ENCODE measurements at regions of chrX and their contacts with region 1.

Region 1: GRCh38 chrX:84974803-84975202 is 28.9 kb upstream of the APOOL start:
- DNase-seq: peak in 1 of 3 donors; percentile 28
- ATAC-seq: no peak
- H3K4me3 ChIP-seq: no peak overlapping the region
- H3K27ac ChIP-seq: no peak overlapping the region
- H3K4me1 ChIP-seq: no peaks in the 10 kb centered on the region
- H3K27me3 ChIP-seq: no peaks in the 10 kb centered on the region

Region 2: DNA sequence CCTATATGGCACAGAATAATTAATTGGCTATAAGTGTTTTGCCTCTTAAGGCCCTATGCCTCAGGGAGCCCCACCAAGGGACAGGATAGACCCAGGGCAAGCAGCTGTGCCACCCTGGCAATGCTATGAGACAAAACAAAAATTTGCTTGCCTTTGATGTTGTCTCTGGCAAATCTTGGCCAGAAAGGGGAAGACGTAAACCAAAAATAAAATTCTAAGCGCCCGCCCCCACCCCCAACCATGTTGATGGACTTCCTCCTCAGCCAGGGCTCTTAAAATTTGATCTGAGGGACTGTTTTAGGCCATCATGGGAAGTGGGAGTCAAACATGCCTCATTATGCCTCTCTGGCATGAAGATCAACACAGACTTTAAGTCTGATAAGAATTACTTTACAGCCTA is 101.6 kb before region 1 on chrX:
- intact Hi-C with region 1: no loop called
- DNase-seq: peak in 1 of 3 donors; percentile 22
- ATAC-seq: no peak
- H3K4me3 ChIP-seq: no peak overlapping the region
- H3K27ac ChIP-seq: no peak overlapping the region
- H3K4me1 ChIP-seq: no peaks in the 10 kb centered on the region
- H3K27me3 ChIP-seq: no peaks in the 10 kb centered on the region

Region 3: DNA sequence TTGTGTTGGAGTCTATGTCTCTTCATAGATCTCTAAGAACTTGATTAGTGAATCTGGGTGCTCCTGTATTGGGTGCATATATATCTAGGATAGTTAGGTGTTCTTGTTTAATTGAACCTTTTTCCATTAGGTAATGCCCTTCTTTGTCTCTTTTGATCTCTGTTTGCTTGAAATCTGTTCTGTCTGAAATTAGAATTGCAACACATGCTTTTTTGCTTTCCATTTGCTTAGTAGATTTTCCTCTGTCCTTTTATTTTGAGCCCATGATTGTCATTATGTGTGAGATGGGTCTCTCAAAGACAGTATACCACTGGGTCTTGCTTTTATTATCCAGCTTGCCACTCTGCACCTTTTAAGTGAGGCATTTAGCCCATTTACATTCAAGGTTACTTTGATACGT is 50.2 kb before region 1 on chrX:
- intact Hi-C with region 1: loop called in 1 of 4 experiments (anchors 10 kb)
- DNase-seq: no peak
- ATAC-seq: no peak
- H3K4me3 ChIP-seq: no peak overlapping the region
- H3K27ac ChIP-seq: no peak overlapping the region
- H3K4me1 ChIP-seq: no peaks in the 10 kb centered on the region
- H3K27me3 ChIP-seq: no peaks in the 10 kb centered on the region

Region 4: DNA sequence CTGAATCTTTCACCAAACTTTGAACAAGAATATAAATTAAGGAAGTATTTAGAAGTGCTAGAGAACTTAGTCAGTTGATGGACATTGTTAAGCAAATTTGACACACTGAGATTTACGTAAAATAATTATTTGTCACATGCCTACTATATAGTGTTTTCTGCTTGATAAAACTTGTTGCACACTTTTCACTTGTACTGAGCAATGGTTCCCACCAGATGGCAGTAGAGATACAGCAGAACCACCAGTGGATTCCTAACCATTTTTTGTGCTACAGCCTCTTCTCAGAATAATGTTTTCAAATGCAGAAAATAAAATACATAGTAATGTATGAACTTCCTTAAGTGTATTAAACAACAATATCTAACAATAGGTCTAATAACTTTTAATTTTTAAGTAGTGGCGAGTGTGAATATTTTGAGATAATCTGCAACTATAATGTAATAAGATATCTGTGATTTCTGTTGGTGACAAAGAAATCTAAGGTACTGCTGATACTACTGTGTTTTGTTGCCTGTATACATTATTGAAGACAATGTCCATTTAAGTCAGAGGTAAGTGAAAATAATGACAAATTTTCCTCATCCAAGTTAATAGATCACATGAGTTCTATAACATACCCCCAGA is 110.1 kb after region 1 on chrX:
- intact Hi-C with region 1: no loop called
- DNase-seq: no peak
- ATAC-seq: no peak
- H3K4me3 ChIP-seq: no peak overlapping the region
- H3K27ac ChIP-seq: no peak overlapping the region
- H3K4me1 ChIP-seq: no peaks in the 10 kb centered on the region
- H3K27me3 ChIP-seq: no peaks in the 10 kb centered on the region

Region 5: GRCh38 chrX:85221361-85221760 is 246.6 kb after region 1 on chrX:
- intact Hi-C with region 1: no loop called
- DNase-seq: no peak
- ATAC-seq: no peak
- H3K4me3 ChIP-seq: no peak overlapping the region
- H3K27ac ChIP-seq: no peak overlapping the region
- H3K4me1 ChIP-seq: no peaks in the 10 kb centered on the region
- H3K27me3 ChIP-seq: no peaks in the 10 kb centered on the region